Esophagus muscularis mucosa (tissue), 4 donors: ENCODE measurements at regions of chr9 and their contacts with region 1.

Region 1: DNA sequence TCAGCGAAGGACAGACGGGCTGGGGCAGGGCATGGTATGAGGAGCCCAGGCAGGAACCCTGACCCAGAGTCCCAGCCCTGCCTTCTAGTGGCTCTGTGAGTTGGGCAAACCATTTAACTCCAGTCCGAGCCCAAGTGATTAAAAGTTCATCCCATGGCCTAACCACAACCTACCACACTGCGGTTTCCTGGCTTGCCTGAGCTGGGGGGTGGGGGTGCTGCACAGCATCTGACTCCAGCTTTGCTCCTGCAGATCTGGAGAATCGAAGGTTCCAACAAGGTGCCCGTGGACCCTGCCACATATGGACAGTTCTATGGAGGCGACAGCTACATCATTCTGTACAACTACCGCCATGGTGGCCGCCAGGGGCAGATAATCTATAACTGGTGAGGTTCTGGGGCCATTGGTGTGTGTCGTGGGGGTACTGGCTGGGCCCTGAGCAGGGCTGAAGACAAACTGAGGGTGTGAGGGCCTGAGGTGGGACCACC is 49.0 kb downstream of the STOM start:
- DNase-seq: no peak
- H3K4me3 ChIP-seq: no peak overlapping the region
- H3K27ac ChIP-seq: peak overlapping the region; percentile 87 to 99 (median 92)
- H3K4me1 ChIP-seq: peaks cover 91 to 100% (median 98%) of the 10 kb centered on the region in 4 donors
- H3K27me3 ChIP-seq: no peaks in the 10 kb centered on the region
- CTCF ChIP-seq: no peak
- EP300 ChIP-seq: no peak
- POLR2A ChIP-seq: no peak

Region 2: DNA sequence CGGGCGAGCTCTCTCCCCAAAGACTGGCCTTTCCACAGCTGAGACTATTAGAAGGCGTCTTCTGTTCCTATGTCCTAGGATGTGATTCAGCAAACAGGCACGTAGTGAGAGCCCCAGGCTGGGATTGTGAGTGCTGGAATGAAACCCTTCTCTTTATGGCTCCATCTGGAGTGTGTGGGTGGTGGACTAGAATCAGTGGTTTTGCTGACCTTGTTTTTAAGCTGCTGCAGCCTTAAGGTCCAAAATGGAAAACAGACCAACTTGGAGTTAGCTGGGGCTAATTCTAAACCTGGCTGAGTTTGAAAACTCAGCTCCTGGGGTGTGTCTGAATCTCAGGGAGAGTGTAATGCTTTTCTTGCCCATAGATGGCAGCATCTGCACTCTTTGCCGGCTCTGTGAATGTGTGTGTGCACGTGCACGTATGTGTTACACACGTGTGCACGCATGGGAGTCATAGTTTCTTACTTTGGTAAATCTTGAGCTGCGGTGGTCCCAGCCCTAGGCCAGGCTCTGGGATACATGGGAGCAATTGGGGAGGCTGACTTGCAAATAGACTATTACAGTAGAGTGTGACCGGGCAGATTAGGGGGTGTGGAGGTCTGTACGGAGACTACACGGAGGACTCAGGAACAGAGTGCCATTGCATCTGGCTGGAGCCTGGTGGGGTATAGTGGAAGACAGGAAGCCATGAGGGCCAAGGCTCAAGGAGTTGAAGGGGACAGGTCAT is 42.4 kb before region 1 on chr9:
- intact Hi-C with region 1: loop called (anchors 2 kb)
- DNase-seq: no peak
- H3K4me3 ChIP-seq: peak overlapping the region in 3 of 4 donors; percentile 5 to 16 (median 11)
- H3K27ac ChIP-seq: peak overlapping the region; percentile 94 to 99 (median 96)
- H3K4me1 ChIP-seq: peaks cover 93 to 100% (median 100%) of the 10 kb centered on the region in 4 donors
- H3K27me3 ChIP-seq: no peaks in the 10 kb centered on the region
- CTCF ChIP-seq: peak; percentile 86 to 93 (median 90)
- EP300 ChIP-seq: no peak
- POLR2A ChIP-seq: no peak

Region 3: DNA sequence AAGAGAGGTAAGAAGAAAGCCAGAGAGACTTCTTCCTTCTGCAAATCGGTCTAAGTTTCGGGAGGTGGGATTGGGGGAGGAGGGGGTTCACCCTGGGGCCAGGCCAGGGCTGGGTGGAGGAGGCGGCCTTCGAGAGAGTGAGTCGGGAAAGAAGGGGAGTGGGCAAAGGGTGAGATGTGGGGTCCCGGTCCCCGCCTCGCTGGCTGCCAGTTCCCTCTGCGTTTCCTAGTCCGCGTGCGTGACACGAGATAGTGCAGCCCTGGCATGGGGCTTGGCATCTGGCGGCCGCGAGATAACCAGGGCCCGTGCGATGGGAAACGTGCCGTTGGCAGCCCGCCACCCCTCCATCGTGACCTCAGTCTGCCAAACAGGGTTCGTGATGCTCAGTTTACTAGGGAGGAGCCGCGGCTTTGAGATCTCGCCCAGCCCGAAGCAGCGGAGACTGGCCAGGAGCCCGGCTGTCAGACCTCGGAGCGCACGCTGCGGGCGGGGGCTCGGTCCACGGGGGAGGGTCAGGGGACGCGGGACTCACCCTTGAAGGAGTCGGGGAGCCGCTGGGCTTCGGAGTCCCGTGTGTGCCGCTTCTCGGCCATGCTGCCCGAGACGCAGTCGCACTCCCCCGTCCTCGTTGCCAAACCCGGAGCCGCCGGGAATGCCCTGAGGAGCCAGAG is 48.7 kb after region 1 on chr9 and contains the start of gene STOM:
- intact Hi-C with region 1: loop called (anchors 2 kb)
- DNase-seq: peak; percentile 97
- H3K4me3 ChIP-seq: peak within 1 kb of the TSS; percentile 74 to 87 (median 82)
- H3K27ac ChIP-seq: peak within 1 kb of the TSS; percentile 94 to 97 (median 96)
- H3K4me1 ChIP-seq: peaks cover 54 to 84% (median 77%) of the 10 kb centered on the region in 4 donors
- H3K27me3 ChIP-seq: no peaks in the 10 kb centered on the region
- CTCF ChIP-seq: peak in 1 of 3 experiments; percentile 6
- EP300 ChIP-seq: no peak
- POLR2A ChIP-seq: peak; percentile 99
- total RNA-seq, gene STOM: 250 to 554 (median 444) TPM

Region 4: GRCh38 chr9:121598965-121599871 is 278.2 kb after region 1 on chr9:
- intact Hi-C with region 1: no loop called
- DNase-seq: no peak
- H3K4me3 ChIP-seq: peak overlapping the region; percentile 61 to 82 (median 70)
- H3K27ac ChIP-seq: peak overlapping the region; percentile 85 to 99 (median 92)
- H3K4me1 ChIP-seq: peaks cover 37 to 67% (median 60%) of the 10 kb centered on the region in 4 donors
- H3K27me3 ChIP-seq: no peaks in the 10 kb centered on the region
- CTCF ChIP-seq: no peak
- EP300 ChIP-seq: no peak
- POLR2A ChIP-seq: peak; percentile 56